Activated B cell treated with CpG ODN at 0.5 μM for 24 hours (primary cell): ENCODE measurements at regions of chr11 and their contacts with region 1.

Region 1: GRCh38 chr11:72471005-72471898 is 36.9 kb upstream of the CLPB start:
- DNase-seq: peak; percentile 25
- ATAC-seq: peak; percentile 64
- H3K4me3 Mint-ChIP-seq: peak overlapping the region; percentile 28
- H3K27ac Mint-ChIP-seq: no peak overlapping the region
- H3K4me1 Mint-ChIP-seq: peaks cover 2% of the 10 kb centered on the region
- H3K27me3 Mint-ChIP-seq: peaks cover 22% of the 10 kb centered on the region
- CTCF ChIP-seq: peak; percentile 52

Region 2: DNA sequence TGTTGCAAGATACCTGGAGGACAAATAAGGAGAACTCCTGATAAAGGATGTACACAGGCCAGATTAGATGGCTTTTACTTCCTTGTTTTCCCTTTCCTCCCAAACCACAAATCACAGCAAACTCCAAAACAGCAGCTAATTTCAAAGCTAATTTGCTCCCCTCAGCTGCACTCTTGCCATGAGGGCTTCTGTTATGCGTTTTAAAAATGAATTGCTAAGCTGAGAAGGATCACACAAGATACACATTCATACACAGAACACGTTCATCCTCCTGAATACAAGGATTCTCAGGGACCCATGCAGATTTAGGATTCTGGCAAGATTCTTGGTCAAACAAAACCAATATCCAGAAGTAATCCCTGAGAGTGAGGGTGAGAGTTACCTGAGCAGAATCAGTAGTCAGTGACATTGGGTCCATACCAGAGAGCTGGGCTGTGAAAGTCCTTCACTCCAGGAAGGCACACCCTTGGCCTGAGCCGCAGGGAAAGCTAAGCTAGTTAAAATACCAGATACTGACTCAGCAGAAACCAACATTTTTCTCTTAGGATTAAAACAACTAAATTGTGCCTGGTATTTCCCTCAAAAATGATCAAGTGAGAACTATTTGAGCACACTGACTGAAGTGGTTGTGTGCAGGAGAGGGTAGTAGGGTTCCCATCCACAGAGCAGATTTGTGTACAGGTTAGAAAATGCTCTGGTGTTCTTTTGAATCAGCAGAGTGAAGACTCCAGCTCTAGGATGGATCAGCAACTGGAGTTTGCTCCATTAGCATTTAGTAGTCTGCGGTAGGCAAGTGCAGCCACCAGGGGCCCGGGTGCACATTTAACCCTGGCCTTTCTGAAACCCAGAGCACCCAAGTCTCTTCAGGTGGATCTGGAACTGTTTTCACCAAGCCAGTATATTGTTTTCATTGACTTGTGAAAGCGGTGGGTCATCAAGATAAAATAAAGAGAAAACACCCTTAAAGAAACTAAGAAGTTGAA is 63.6 kb after region 1 on chr11:
- CTCF ChIA-PET with region 1: no interaction called
- POLR2A ChIA-PET with region 1: no interaction called
- intact Hi-C with region 1: no loop called
- DNase-seq: no peak
- ATAC-seq: no peak
- H3K4me3 Mint-ChIP-seq: no peak overlapping the region
- H3K27ac Mint-ChIP-seq: no peak overlapping the region
- H3K4me1 Mint-ChIP-seq: no peaks in the 10 kb centered on the region
- H3K27me3 Mint-ChIP-seq: peaks cover 50% of the 10 kb centered on the region
- CTCF ChIP-seq: no peak

Region 3: DNA sequence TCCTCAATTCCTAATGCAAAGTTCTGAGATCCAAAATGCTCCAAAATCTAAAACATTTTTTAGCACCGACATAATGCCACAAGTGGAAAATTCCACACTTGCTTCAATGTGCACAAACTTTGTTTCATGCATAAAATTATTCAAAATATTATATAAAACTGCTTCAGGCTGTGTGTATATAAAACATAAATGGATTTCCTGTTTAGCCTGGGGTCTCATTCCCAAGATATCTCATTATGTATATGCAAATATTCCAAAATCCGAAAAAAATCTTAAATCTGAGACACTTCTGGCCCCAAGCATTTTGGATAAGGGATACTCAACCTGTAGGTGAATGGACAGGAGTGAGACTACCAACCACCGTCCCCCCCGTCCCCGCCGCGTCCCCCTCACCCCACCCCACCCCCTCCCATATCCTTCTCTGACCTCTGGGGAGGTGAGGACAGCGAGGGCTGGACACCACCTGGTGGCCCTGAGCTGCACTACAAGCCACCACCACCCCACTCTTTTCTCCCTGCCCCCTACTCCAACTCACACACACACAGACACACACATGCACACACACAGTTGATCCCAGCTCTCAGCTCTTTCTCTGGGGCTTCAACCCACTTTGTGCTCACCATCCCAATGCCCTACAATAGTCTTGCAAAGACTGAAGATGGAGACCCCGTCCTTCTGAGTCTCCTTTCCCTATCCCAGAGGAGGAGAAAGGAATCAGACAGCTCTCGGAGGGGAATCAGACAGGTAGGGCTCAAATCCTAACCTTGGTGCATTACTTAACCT is 102.0 kb after region 1 on chr11:
- CTCF ChIA-PET with region 1: interaction called, 7 read pairs
- POLR2A ChIA-PET with region 1: no interaction called
- intact Hi-C with region 1: loop called (anchors 5 kb)
- DNase-seq: no peak
- ATAC-seq: peak; percentile 71
- H3K4me3 Mint-ChIP-seq: no peak overlapping the region
- H3K27ac Mint-ChIP-seq: no peak overlapping the region
- H3K4me1 Mint-ChIP-seq: peaks cover 3% of the 10 kb centered on the region
- H3K27me3 Mint-ChIP-seq: peaks cover 39% of the 10 kb centered on the region
- CTCF ChIP-seq: no peak

Region 4: GRCh38 chr11:72585762-72586311 is 114.6 kb after region 1 on chr11:
- CTCF ChIA-PET with region 1: no interaction called
- POLR2A ChIA-PET with region 1: no interaction called
- intact Hi-C with region 1: loop called (anchors 5 kb)
- DNase-seq: peak; percentile 49
- ATAC-seq: peak; percentile 81
- H3K4me3 Mint-ChIP-seq: peak overlapping the region; percentile 87
- H3K27ac Mint-ChIP-seq: no peak overlapping the region
- H3K4me1 Mint-ChIP-seq: peaks cover 31% of the 10 kb centered on the region
- H3K27me3 Mint-ChIP-seq: peaks cover 21% of the 10 kb centered on the region
- CTCF ChIP-seq: peak; percentile 54

Region 5: DNA sequence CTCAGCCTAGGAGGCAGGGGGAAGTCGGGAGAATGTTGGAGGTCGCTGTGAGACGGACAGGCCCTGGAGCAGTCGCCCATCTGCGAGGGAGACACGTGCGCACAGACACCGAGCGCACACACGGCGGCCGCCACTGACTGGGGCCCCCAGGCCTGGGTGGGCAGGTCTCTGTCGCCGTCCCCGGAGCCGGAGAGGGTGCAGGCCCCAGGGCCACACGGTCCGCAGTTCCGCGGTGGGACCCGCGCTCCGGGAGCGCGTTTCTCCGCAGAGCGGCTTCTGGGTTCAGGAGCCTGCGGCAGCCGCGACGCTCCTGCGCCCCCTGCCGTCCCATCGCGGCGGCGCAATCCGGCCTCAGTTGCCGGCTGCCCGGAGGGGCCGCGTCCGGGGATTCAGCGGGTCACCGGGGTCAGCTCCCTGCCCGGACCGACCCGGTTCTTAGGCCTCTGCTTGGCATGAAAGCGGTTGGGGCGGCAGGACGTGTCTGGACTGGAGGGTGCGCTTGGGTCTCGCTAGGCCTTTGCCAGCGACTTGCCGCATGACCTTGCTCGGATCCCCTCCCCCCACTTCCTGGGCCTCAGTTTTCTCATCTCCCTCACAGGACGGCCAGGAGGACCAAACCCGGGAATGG is 171.7 kb after region 1 on chr11:
- CTCF ChIA-PET with region 1: interaction called, 8 read pairs
- POLR2A ChIA-PET with region 1: no interaction called
- intact Hi-C with region 1: loop called (anchors 1 kb)
- DNase-seq: peak; percentile 78
- ATAC-seq: peak; percentile 85
- H3K4me3 Mint-ChIP-seq: peak overlapping the region; percentile 67
- H3K27ac Mint-ChIP-seq: no peak overlapping the region
- H3K4me1 Mint-ChIP-seq: no peaks in the 10 kb centered on the region
- H3K27me3 Mint-ChIP-seq: peaks cover 7% of the 10 kb centered on the region
- CTCF ChIP-seq: peak; percentile 72

Region 6: GRCh38 chr11:72683782-72684200 is 212.5 kb after region 1 on chr11:
- CTCF ChIA-PET with region 1: interaction called, 18 read pairs
- POLR2A ChIA-PET with region 1: no interaction called
- intact Hi-C with region 1: loop called (anchors 1 kb)
- DNase-seq: peak; percentile 70
- ATAC-seq: peak; percentile 79
- H3K4me3 Mint-ChIP-seq: no peak overlapping the region
- H3K27ac Mint-ChIP-seq: no peak overlapping the region
- H3K4me1 Mint-ChIP-seq: peaks cover 1% of the 10 kb centered on the region
- H3K27me3 Mint-ChIP-seq: no peaks in the 10 kb centered on the region
- CTCF ChIP-seq: peak; percentile 49

Region 7: DNA sequence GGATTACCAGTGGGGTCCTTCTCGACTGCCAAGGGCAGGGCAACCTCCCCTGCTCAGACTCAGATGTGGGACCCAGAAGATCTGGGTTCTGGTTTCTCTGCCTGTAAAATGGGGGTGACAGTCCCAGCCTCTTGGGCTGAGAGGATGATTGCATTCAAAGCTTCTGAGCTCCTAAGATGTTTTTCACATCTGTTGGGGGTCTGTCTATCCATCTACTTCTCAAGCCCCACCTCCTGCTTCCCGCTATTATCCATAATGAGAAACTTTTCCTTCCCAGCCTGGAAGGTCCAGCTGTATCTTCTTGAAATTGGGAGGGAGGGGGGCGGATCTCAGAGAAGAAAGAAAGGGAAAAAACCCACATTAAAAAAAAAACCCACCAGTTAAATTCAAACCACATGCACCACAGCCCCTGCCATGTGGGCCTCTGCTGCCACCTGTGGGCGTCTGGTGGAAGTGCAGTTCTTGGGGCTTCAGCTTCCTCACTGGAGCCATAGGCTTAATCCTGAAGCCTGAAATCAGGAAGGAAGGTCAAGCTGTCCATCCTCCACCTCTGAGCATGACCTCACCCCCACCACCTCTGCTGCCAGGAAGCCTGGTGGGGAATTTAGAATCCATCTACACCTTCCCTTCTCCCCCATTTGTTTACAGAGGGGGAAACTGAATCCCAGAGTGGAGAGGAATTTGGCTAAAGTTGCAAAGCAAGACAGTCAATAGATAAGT is 864.1 kb after region 1 on chr11:
- CTCF ChIA-PET with region 1: no interaction called
- POLR2A ChIA-PET with region 1: no interaction called
- intact Hi-C with region 1: loop called (anchors 5 kb)
- DNase-seq: peak; percentile 78
- ATAC-seq: peak; percentile 89
- H3K4me3 Mint-ChIP-seq: no peak overlapping the region
- H3K27ac Mint-ChIP-seq: no peak overlapping the region
- H3K4me1 Mint-ChIP-seq: no peaks in the 10 kb centered on the region
- H3K27me3 Mint-ChIP-seq: no peaks in the 10 kb centered on the region
- CTCF ChIP-seq: peak; percentile 85